ENCODE measurements at regions of chr9 and their contacts with region 1.

Region 1: DNA sequence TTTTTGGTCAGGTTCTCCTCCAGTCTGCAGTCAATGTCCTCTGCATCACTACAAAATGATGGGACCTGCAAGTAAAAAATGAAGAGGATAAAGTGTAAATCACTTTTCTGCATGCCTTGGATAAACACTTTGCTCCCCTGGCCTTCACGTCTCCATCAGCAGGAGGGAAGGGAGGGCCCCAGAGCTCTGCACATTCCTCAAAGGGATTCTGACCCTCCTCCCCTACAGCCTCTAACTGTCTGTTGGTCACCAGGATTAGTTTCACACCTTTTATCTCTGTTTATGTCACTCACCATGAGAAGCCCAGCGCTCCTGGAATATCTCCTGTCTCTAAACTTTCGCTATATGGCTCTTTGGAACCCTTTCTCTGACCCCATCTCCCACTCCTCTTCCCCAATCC is 103.3 kb downstream of the SVEP1 start:
- DNase-seq: no peak
- H3K4me3 ChIP-seq: no peak overlapping the region
- H3K27ac ChIP-seq: no peak overlapping the region
- H3K4me1 ChIP-seq: no peaks in the 10 kb centered on the region
- H3K27me3 ChIP-seq: no peaks in the 10 kb centered on the region
- CTCF ChIP-seq: no peak
- EP300 ChIP-seq: no peak
- POLR2A ChIP-seq: no peak

Region 2: DNA sequence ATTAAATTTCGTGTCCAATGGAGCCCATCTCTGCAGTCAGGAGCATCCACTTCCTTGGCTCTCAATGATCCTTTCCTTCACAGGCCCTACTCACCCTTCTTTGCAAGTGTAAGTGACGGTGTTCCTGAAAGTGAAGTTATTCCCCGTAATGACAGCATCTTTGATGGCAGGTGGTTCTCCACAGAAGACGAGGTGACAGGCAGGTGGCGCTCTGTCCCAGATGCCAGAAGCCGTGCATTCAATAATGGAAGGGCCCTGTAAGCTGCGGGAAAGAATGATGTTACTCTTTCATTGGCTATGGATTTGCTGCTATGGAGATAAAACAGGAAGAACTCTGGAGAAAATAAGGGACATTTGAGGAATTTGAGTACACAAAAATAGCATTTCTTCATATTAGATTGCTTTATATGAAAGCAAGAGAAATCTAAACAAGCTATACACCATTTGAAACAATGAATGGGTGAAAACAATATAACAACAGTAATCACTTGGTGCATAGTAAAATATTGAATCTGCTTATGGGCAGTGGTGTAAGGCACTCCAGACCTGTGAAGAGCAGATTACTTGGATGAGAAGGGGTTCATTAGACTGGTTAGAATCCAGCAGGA is 48.6 kb before region 1 on chr9:
- intact Hi-C with region 1: no loop called
- DNase-seq: peak in 3 of 5 donors; percentile 20 to 38 (median 26)
- H3K4me3 ChIP-seq: no peak overlapping the region
- H3K27ac ChIP-seq: no peak overlapping the region
- H3K4me1 ChIP-seq: no peaks in the 10 kb centered on the region
- H3K27me3 ChIP-seq: no peaks in the 10 kb centered on the region
- CTCF ChIP-seq: no peak
- EP300 ChIP-seq: no peak
- POLR2A ChIP-seq: no peak

Region 3: GRCh38 chr9:110615498-110615897 is 139.2 kb after region 1 on chr9:
- intact Hi-C with region 1: loop called in 1 of 4 experiments (anchors 1 kb)
- DNase-seq: no peak
- H3K4me3 ChIP-seq: no peak overlapping the region
- H3K27ac ChIP-seq: no peak overlapping the region
- H3K4me1 ChIP-seq: no peaks in the 10 kb centered on the region
- H3K27me3 ChIP-seq: no peaks in the 10 kb centered on the region
- CTCF ChIP-seq: no peak
- EP300 ChIP-seq: no peak
- POLR2A ChIP-seq: no peak

Measured in ovary (tissue), 10 donors.